Posterior vena cava (tissue), 2 donors: ENCODE measurements at regions of chr19 and their contacts with region 1.

Region 1: DNA sequence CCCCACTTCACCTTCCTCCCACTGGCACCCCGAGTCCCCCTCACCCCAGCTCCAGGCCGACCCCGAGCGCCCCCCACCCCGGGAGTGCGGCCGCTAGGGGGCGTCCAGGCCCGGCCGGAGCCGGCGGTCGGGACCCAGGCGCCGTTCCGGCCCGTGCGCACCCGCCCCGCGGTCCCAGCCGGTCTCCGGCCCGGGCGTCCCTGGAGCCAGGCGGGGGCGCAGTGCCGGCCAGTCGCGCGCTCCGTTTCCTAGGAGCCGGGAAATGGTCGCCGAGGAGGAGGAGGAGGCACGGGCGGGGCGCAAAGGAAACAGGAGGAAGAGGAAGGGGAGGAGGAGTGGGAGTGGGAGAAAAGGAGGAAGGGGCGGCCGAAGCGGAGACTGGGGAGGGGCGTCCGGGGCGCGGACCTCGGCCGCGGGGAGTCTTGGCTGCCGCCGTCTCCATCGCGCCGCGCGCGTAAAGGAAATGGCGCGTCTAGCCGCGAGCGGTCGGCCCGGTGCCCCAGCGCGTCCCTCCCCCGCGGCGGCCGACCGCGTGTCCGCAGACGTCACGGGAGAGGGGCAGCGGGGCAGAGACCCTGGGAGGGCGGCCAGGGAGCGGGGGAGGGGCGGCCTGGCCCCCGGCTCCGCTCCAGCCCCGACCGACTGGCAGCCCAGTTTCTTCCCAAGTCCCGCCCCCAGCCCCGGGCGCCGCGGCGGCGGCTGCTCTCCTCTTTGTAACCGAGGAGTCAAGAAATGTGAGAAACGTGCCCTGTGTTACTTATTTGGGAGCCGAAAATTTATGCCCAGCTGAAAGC is 1.1 kb upstream of the KCTD15 start:
- DNase-seq: peak; percentile 94

Region 2: GRCh38 chr19:33603377-33603776 is 192.2 kb before region 1 on chr19:
- intact Hi-C with region 1: no loop called
- DNase-seq: no peak

Region 3: GRCh38 chr19:33868788-33869412 is 73.3 kb after region 1 on chr19:
- intact Hi-C with region 1: loop called in 1 of 2 experiments (anchors 5 kb)
- DNase-seq: peak; percentile 85